Sciatic nerve (tissue), 2 donors: ENCODE measurements at regions of chr2 and their contacts with region 1.

Region 1: DNA sequence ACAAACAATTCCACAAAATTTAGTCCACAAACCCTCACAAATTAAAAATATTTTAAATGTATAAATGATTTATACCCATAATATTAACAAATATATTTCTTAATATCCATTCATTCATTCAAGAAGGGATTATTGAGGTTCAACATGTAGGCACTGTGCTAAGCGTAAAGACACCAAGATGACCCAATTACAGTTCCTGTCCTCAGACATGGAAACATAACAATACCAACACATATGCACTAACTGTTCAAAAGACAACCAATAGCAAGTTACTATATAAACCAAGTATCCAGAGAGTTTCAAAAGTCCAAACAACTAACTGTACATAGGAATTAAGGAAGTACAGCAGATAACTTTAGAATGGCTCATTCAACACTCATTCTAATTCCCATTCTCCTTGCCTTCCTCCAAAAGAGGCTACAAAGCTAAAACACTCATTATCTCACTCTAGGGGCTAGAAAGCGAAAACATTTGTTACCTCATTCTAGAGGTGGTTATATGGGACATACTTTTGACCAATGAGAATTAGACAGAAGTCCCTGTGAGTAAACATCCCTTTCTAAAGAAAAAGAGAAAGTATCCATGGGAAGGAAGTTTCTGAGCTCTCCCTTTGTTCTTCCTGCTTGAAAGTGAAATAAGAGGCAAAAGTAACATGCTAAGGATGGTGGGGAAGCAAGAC is 292.4 kb downstream of the ZEB2 start:
- DNase-seq: no peak
- ATAC-seq: no peak

Region 2: DNA sequence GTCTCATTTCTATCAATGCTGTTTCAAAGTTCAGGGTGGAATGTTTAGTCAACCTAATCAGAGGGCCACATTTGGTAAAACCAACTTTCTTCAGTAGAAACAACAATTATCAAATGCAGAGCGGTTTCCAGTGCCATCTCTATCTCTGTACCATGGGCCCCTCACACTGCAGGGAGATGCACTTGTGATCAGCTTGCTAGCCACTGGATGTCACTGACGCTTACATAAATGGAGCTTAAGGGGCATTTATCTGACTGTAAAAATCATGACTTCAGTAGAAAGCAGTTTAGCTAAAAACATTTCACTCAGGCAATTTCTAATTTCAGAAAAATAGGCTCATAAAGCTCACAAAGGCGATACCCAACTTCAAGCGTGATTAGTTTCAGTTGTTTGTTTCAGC is 385.6 kb before region 1 on chr2:
- intact Hi-C with region 1: loop called (anchors 10 kb)
- DNase-seq: no peak
- ATAC-seq: no peak

Region 3: GRCh38 chr2:143901185-143901842 is 326.3 kb before region 1 on chr2:
- intact Hi-C with region 1: no loop called
- DNase-seq: no peak
- ATAC-seq: no peak

Region 4: DNA sequence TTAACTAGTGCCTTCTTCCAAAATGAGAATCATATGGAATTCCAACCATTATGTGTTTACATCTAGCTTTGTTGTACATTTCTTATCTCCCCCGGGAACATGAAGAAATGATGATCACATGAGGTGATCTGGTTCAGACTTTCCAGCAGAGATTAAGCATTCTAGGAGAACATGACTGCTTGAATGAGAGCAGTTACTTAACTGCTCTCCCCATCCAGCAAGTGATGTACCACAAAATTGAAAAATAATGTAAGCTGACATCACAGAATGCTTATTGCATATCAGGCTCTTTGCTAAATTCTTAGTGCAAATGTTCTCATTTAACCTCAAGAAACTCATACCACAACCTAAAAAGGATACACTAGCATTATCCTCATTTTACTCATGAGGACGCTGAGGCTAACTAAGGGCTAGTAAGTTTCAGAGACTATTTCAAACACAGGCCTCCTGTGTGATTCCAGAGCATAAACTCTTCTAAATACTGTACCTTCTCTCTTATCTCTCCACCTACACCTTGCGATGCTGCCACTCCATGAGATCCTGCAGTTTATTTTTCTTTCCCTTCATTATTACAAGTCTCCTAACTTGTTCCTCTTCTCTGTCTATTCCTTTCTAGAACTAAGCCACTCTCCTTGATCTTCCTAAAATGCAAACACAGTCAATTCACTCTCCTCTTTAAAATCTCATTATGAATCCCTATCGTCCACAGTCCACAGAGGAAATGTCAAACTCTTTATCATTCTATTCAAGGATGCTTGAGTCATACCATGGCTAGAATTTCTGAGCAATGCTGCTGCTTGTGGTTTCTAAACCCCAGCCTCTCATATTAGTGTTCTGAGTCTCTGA is 1517.2 kb after region 1 on chr2:
- intact Hi-C with region 1: no loop called
- DNase-seq: no peak
- ATAC-seq: no peak